Activated CD8-positive, alpha-beta memory T cell treated with anti-CD3 and anti-CD28 coated beads, Interleukin-2, amount 10 ng/mL, durations not matched to agents 7 days and 5 days (primary cell): ENCODE measurements at regions of chr5 and their contacts with region 1.

Region 1: GRCh38 chr5:39080597-39081204 is 6.5 kb upstream of the RICTOR start:
- DNase-seq: peak; percentile 56
- ATAC-seq: peak; percentile 46
- H3K4me3 Mint-ChIP-seq: no peak overlapping the region
- H3K27ac Mint-ChIP-seq: no peak overlapping the region
- H3K4me1 Mint-ChIP-seq: peaks cover 21% of the 10 kb centered on the region
- H3K27me3 Mint-ChIP-seq: peaks cover 24% of the 10 kb centered on the region

Region 2: GRCh38 chr5:39024005-39024404 is 56.7 kb before region 1 on chr5:
- CTCF ChIA-PET with region 1: no interaction called
- DNase-seq: no peak
- ATAC-seq: no peak
- H3K4me3 Mint-ChIP-seq: no peak overlapping the region
- H3K27ac Mint-ChIP-seq: no peak overlapping the region
- H3K4me1 Mint-ChIP-seq: peaks cover 24% of the 10 kb centered on the region
- H3K27me3 Mint-ChIP-seq: no peaks in the 10 kb centered on the region

Region 3: DNA sequence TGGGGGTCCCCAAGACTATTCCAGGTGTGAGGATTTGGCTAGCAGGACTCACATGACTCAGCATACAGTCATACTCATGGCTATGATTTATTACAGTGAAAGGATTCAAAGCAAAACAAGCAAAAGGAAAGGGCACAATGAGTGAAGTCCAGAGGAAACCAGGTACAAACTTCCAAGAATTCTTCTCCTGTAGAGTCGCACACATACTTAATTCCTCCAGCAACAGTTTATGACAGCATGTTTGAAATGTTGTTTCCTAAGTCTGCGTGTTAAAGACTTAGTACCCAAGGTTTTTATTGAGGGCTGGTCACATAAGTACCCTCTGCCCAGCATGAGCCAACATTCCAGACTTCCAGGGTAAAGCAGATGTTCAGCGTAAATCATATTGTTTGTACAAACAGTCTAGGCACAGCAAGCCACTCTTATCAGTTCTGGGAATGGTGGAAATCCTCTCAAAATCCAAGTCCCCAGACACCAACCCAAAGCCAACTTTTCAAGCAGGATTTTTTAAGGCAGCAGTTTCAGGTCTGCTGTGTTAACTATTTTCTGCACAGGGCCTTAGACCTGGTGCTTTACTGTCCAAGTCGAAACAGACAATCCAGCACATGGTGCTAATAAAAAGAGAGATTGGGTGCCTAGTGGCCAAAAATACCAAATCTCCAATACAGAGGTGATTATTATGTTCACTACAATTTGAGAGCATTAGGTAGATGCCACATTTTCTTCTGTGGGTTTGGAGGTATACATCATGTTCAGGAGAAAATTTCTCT is 12.1 kb after region 1 on chr5:
- CTCF ChIA-PET with region 1: interaction called, 10 read pairs
- DNase-seq: no peak
- ATAC-seq: no peak
- H3K4me3 Mint-ChIP-seq: no peak overlapping the region
- H3K27ac Mint-ChIP-seq: no peak overlapping the region
- H3K4me1 Mint-ChIP-seq: no peaks in the 10 kb centered on the region
- H3K27me3 Mint-ChIP-seq: peaks cover 28% of the 10 kb centered on the region

Region 4: GRCh38 chr5:39102684-39103155 is 22.0 kb after region 1 on chr5:
- CTCF ChIA-PET with region 1: interaction called, 15 read pairs
- DNase-seq: no peak
- ATAC-seq: no peak
- H3K4me3 Mint-ChIP-seq: no peak overlapping the region
- H3K27ac Mint-ChIP-seq: no peak overlapping the region
- H3K4me1 Mint-ChIP-seq: peaks cover 17% of the 10 kb centered on the region
- H3K27me3 Mint-ChIP-seq: no peaks in the 10 kb centered on the region

Region 5: GRCh38 chr5:39302472-39302871 is 221.8 kb after region 1 on chr5:
- CTCF ChIA-PET with region 1: no interaction called
- DNase-seq: no peak
- ATAC-seq: no peak
- H3K4me3 Mint-ChIP-seq: no peak overlapping the region
- H3K27ac Mint-ChIP-seq: no peak overlapping the region
- H3K4me1 Mint-ChIP-seq: no peaks in the 10 kb centered on the region
- H3K27me3 Mint-ChIP-seq: no peaks in the 10 kb centered on the region